ENCODE measurements at regions of chr18 and their contacts with region 1.

Region 1: GRCh38 chr18:2846636-2847364 is at the start of gene EMILIN2:
- DNase-seq: peak; percentile 60
- H3K4me3 Mint-ChIP-seq: peak within 1 kb of the TSS; percentile 84
- H3K27ac Mint-ChIP-seq: peak within 1 kb of the TSS; percentile 11
- H3K4me1 Mint-ChIP-seq: peaks cover 29% of the 10 kb centered on the region
- H3K27me3 Mint-ChIP-seq: peaks cover 27% of the 10 kb centered on the region
- total RNA-seq, gene EMILIN2: 18.7 to 20.1 TPM

Region 2: DNA sequence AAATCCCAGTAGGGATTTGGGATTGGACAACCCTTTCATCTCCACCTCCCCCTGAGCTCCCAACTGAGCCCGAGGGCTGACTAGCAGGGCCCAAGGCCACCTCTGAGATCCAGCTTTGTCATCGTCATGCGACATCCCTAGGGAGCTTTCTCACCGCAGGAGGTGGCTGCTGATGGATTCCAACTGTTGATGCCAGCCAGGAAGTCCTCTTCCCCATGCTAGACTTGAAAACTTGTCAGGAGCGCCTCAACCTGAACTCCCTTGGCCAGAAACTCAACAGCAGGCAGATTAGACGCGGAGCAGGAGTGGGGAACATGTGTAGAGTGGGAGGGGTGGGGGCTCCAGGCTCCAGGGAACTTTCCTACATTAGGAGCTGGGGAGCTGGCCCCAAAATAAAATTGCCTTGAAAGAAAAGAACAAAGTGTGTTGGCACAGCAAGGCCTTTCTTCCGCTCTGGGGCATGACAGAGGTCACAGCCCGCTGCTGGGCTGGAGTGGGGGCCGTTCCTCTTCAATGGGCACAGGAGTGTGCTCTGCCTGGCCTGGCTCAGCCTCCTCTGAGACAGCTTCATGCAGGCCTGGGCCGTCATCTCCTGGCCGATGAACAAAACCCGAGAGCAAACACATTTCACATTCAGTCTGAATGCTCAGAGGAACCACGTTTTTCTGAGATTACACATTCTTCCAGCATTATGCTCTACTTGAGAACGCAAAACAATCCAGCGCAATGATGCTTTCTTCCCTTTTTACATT is 34.5 kb after region 1 on chr18:
- CTCF ChIA-PET with region 1: interaction called, 4 read pairs
- POLR2A ChIA-PET with region 1: no interaction called
- intact Hi-C with region 1: loop called (anchors 2 kb)
- DNase-seq: peak; percentile 25
- H3K4me3 Mint-ChIP-seq: peak overlapping the region; percentile 73
- H3K27ac Mint-ChIP-seq: peak overlapping the region; percentile 83
- H3K4me1 Mint-ChIP-seq: peaks cover 28% of the 10 kb centered on the region
- H3K27me3 Mint-ChIP-seq: no peaks in the 10 kb centered on the region

Region 3: DNA sequence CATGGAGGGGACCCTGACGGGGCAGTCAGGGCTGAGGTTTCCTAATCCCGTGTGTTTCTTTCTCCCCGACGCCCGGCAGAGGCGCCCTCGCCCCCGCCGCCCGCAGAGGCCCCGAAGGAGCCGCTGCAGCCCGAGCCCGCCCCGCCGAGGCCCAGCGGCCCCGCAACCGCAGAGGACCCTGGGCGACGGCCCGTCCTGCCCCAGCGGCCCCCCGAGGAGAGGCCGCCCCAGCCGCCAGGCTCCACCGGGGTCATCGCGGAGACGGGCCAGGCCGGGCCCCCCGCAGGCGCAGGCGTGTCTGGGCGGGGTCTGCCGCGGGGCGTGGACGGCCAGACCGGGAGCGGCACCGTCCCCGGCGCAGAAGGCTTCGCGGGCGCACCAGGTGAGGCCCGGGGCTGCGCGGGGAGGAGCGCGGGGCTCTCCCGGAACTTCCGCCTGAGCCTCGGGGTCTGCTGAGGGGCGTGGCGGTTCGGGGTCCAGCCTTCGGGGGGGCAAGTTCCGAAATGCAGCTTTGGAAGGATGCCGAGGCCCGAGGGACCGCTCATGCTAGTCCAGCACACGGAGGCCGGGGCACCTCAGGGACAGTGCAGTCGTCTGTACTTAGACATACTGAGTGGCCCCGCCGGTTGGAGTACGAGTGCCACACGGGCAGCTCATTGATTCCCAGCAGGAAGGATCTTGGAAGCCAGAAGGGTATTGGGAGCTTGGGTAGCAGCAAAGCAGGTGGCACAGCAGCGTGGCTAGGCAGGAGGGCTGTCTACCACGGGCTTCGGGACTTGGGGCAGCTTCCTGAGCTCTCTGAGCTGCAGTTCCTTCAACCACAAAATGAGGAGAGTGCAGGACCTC is 60.1 kb after region 1 on chr18:
- CTCF ChIA-PET with region 1: no interaction called
- POLR2A ChIA-PET with region 1: interaction called, 6 read pairs
- intact Hi-C with region 1: loop called (anchors 2 kb)
- DNase-seq: peak; percentile 56
- H3K4me3 Mint-ChIP-seq: peak overlapping the region; percentile 83
- H3K27ac Mint-ChIP-seq: peak overlapping the region; percentile 60
- H3K4me1 Mint-ChIP-seq: peaks cover 13% of the 10 kb centered on the region
- H3K27me3 Mint-ChIP-seq: no peaks in the 10 kb centered on the region

Region 4: GRCh38 chr18:2971741-2972552 is 125.1 kb after region 1 on chr18:
- CTCF ChIA-PET with region 1: no interaction called
- POLR2A ChIA-PET with region 1: no interaction called
- intact Hi-C with region 1: loop called (anchors 5 kb)
- DNase-seq: peak; percentile 87
- H3K4me3 Mint-ChIP-seq: peak overlapping the region; percentile 79
- H3K27ac Mint-ChIP-seq: peak overlapping the region; percentile 100
- H3K4me1 Mint-ChIP-seq: peaks cover 92% of the 10 kb centered on the region
- H3K27me3 Mint-ChIP-seq: no peaks in the 10 kb centered on the region